ENCODE measurements at regions of chr12 and their contacts with region 1.

Region 1: DNA sequence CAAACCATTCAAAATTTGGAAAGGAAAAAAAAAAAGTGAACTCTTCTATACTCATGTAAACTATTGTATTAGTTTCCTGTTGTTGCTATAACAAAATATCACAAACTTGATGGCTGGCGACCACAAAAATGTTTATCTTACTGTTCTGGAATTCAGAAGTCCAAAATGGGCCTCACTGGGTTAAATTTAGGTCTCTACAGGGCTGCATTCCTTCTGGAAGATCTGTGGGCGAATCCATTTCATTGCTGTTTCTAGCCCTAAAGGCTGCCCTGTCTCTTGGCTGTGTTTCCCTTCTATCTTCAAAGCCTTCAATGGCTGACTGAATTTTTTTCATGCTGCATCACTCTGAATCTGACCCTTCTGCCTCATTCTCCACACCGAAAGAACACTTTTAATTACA is 105.1 kb upstream of the NAV3 start:
- DNase-seq: no peak
- ATAC-seq: no peak
- H3K4me3 ChIP-seq: no peak overlapping the region
- H3K27ac ChIP-seq: no peak overlapping the region
- H3K4me1 ChIP-seq: no peaks in the 10 kb centered on the region
- H3K27me3 ChIP-seq: no peaks in the 10 kb centered on the region
- CTCF ChIP-seq: no peak

Region 2: GRCh38 chr12:77925536-77926108 is 200.0 kb after region 1 on chr12:
- intact Hi-C with region 1: loop called in 1 of 2 experiments (anchors 5 kb)
- DNase-seq: peak; percentile 24 to 87 (median 69)
- ATAC-seq: peak; percentile 98
- H3K4me3 ChIP-seq: no peak overlapping the region
- H3K27ac ChIP-seq: no peak overlapping the region
- H3K4me1 ChIP-seq: no peaks in the 10 kb centered on the region
- H3K27me3 ChIP-seq: no peaks in the 10 kb centered on the region
- CTCF ChIP-seq: peak; percentile 68 to 88